ENCODE measurements at regions of chr16 and their contacts with region 1.

Region 1: DNA sequence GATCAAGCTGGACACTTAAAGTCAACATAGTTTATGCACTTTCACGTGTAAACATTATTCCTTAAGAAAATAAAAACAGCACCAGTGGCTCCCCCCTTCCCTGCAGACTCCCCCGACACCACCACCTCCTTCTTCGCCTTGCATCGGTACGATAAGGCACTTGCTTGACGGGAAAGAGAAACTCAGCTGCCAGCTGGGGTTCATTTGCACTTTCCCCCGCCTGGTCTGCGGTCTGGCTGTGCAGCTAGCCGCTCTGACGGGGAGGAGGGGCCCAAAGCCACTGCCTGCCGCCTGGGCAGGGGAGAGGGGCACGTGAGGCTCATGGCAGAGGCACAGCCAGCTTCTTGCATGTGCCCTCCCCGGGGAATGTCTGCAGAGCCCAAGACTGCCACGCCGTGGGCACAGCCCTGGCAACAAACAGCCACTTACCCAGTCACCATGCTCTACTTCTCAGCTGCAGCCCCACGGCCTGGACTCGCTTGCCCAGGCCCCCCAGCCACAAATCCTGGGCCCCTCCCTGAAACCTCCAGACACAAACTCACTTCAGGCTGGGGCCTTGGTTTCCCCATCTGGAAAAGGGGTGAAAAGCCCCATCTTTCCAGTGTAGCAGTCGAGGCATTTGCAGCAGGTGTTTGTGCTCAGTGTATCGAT is 16.5 kb upstream of the PRM1 start:
- DNase-seq: peak; percentile 95
- ATAC-seq: peak; percentile 97
- H3K4me3 ChIP-seq: peak overlapping the region in 4 of 5 experiments; percentile 0 to 41 (median 25)
- H3K4me3 Mint-ChIP-seq: peak overlapping the region; percentile 67
- H3K27ac ChIP-seq: peak overlapping the region; percentile 67 to 73
- H3K27ac Mint-ChIP-seq: peak overlapping the region; percentile 93
- H3K4me1 ChIP-seq: peaks cover 61 to 66% of the 10 kb centered on the region in 2 donors
- H3K4me1 Mint-ChIP-seq: peaks cover 71% of the 10 kb centered on the region
- H3K27me3 ChIP-seq: peaks cover 0 to 4% (median 0%) of the 10 kb centered on the region in 4 experiments
- H3K27me3 Mint-ChIP-seq: no peaks in the 10 kb centered on the region
- CTCF ChIP-seq: peak; percentile 35

Region 2: DNA sequence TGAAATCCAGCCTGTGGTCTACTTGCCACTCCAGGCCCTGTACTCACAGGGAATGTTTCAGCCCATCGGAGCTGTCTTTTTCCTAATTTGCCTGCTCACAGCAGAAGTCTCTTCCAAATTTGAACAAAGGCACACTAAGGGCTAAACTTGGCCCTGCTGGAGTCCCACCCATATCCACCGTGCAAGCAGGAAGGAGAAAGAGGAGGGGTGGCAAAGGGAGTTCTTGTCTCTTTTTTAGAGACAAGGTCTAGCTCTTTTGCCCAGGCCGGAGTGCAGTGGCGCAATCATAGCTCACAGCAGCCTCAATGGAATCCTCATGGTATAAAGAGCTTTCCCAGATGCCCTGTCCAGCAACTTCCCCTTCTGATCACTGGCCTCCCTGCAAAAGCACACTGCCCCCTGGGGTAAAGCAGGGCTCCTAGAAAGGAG is 13.8 kb before region 1 on chr16:
- CTCF ChIA-PET with region 1: interaction called, 6 read pairs
- POLR2A ChIA-PET with region 1: interaction called, 4 read pairs
- intact Hi-C with region 1: loop called (anchors 2 kb)
- DNase-seq: no peak
- ATAC-seq: no peak
- H3K4me3 ChIP-seq: no peak overlapping the region
- H3K4me3 Mint-ChIP-seq: no peak overlapping the region
- H3K27ac ChIP-seq: no peak overlapping the region
- H3K27ac Mint-ChIP-seq: peak overlapping the region; percentile 6
- H3K4me1 ChIP-seq: peaks cover 15% of the 10 kb centered on the region in 2 donors
- H3K4me1 Mint-ChIP-seq: peaks cover 31% of the 10 kb centered on the region
- H3K27me3 ChIP-seq: no peaks in the 10 kb centered on the region
- H3K27me3 Mint-ChIP-seq: no peaks in the 10 kb centered on the region
- CTCF ChIP-seq: no peak

Region 3: DNA sequence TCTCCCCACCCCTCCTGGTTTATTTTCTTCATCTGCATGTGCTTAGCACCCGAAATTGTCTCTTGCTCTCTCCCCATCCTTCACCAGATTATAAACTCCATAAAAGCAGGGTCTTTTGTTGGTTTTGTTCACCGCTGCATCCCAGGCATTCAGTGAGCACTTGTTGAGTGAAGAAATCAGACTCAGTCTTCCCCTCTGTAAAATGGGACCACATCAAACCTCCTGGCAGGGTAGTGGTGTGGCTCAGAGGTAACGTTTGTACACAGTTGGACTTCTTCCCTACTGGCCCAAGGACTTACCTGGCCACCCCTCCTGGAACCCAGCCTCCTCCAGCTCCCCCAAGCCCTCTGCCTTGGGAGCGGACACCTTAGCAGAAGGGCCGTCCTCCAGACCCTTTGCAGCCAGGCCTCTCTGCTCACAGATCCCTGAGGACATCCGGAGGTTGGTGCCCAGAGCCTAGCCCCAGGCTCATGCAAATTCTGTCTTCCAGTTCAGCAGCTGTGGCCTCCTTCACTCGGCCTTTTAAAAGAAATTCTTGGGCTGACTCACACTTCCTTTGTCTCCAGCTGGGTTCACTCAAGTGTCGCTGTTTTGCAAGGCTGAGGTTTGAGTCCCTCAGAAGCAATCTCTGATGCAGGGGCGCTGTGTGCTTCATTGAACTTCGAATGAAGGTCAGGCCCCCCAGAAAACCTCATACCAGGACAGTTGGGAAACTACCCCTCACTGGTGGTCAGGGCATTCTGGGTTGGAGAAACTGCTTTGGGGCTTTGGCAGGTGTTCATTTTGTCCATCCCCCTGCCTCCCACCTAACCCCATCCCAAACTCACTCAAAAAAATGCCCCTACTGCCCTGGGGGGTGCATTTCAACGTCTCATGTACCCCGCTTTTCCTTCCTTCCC is 30.8 kb after region 1 on chr16:
- CTCF ChIA-PET with region 1: interaction called, 44 read pairs
- POLR2A ChIA-PET with region 1: interaction called, 24 read pairs
- intact Hi-C with region 1: loop called (anchors 1 kb)
- DNase-seq: peak; percentile 90
- ATAC-seq: peak; percentile 70
- H3K4me3 ChIP-seq: peak overlapping the region in 4 of 5 experiments; percentile 30 to 64 (median 36)
- H3K4me3 Mint-ChIP-seq: peak overlapping the region; percentile 81
- H3K27ac ChIP-seq: peak overlapping the region; percentile 91 to 94
- H3K27ac Mint-ChIP-seq: peak overlapping the region; percentile 93
- H3K4me1 ChIP-seq: peaks cover 59 to 69% of the 10 kb centered on the region in 2 donors
- H3K4me1 Mint-ChIP-seq: peaks cover 62% of the 10 kb centered on the region
- H3K27me3 ChIP-seq: no peaks in the 10 kb centered on the region
- H3K27me3 Mint-ChIP-seq: no peaks in the 10 kb centered on the region
- CTCF ChIP-seq: no peak

Region 4: DNA sequence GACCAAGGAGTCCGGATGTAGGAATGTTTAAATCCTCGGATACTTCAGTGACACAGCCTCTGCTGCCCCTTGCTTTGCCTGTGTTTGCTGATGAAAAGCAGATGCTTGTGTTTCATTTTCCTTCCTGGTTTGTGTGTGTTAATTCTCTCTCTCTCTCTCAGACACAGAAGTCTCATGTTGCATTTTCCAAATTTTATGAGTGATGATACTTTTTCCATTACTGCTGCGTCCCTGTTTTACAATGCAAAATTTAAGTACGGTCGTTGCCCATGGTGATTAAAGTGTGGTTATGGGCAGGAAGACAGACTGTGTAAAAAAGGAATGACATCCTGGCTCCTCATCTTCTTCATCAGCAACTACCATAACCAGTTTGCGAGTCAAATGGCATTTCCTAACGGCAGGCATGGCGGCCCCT is 53.3 kb after region 1 on chr16:
- CTCF ChIA-PET with region 1: interaction called, 120 read pairs
- POLR2A ChIA-PET with region 1: interaction called, 15 read pairs
- intact Hi-C with region 1: loop called (anchors 1 kb)
- DNase-seq: no peak
- ATAC-seq: no peak
- H3K4me3 ChIP-seq: no peak overlapping the region
- H3K4me3 Mint-ChIP-seq: no peak overlapping the region
- H3K27ac ChIP-seq: no peak overlapping the region
- H3K27ac Mint-ChIP-seq: no peak overlapping the region
- H3K4me1 ChIP-seq: peaks cover 27 to 40% of the 10 kb centered on the region in 2 donors
- H3K4me1 Mint-ChIP-seq: peaks cover 72% of the 10 kb centered on the region
- H3K27me3 ChIP-seq: no peaks in the 10 kb centered on the region
- H3K27me3 Mint-ChIP-seq: no peaks in the 10 kb centered on the region
- CTCF ChIP-seq: no peak

Region 5: DNA sequence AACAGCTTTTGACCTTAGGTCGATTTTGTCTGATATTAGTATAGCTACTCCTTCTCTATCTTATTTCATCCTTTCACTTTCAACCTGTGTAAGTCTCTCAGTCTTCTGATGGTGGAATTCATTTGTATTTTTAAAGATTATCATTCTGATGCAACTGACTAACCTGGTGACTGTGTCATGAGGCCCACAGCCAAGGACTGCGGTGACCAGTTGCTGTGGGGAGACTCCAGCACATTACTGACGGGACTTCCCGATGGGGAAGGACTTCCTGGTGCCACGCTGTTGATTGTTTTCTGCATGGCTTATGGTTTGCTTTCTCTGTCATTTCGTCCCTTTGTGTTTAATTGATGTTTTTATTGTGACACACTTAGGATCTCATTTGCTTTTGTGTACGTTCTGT is 81.8 kb after region 1 on chr16:
- CTCF ChIA-PET with region 1: no interaction called
- POLR2A ChIA-PET with region 1: no interaction called
- intact Hi-C with region 1: no loop called
- DNase-seq: peak; percentile 59
- ATAC-seq: peak; percentile 66
- H3K4me3 ChIP-seq: no peak overlapping the region
- H3K4me3 Mint-ChIP-seq: peak overlapping the region; percentile 78
- H3K27ac ChIP-seq: no peak overlapping the region
- H3K27ac Mint-ChIP-seq: peak overlapping the region; percentile 73
- H3K4me1 ChIP-seq: no peaks in the 10 kb centered on the region
- H3K4me1 Mint-ChIP-seq: peaks cover 11% of the 10 kb centered on the region
- H3K27me3 ChIP-seq: peaks cover 0 to 9% (median 0%) of the 10 kb centered on the region in 4 experiments
- H3K27me3 Mint-ChIP-seq: peaks cover 4% of the 10 kb centered on the region
- CTCF ChIP-seq: no peak